K562 (cell line): ENCODE measurements at regions of chr18 and their contacts with region 1.

Region 1: DNA sequence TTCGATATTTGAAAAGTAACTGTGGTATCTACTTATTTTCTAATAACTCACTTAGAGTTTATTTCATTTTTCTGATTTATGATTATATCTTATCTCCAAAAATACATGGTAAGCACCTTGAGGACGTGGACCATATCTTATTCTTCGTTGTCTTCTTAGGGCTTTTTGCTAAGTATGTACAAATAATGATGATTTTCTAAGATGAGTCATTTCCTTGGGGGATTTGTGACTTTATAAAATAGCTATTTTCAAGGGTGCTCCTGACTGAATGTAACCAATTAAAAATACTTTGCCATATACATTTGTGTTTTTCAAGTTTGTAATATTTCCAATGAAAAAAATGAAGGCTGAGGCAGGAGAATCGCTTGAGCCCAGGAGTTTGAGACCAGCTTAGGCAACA is 56.3 kb downstream of the GREB1L start:
- DNase-seq: no peak
- ATAC-seq: no peak
- H3K4me3 ChIP-seq: no peak overlapping the region
- H3K27ac ChIP-seq: no peak overlapping the region
- H3K4me1 ChIP-seq: no peaks in the 10 kb centered on the region
- H3K27me3 ChIP-seq: no peaks in the 10 kb centered on the region
- CTCF ChIP-seq: no peak
- EP300 ChIP-seq: no peak
- POLR2A ChIP-seq: no peak
- RAD21 ChIP-seq: no peak

Region 2: DNA sequence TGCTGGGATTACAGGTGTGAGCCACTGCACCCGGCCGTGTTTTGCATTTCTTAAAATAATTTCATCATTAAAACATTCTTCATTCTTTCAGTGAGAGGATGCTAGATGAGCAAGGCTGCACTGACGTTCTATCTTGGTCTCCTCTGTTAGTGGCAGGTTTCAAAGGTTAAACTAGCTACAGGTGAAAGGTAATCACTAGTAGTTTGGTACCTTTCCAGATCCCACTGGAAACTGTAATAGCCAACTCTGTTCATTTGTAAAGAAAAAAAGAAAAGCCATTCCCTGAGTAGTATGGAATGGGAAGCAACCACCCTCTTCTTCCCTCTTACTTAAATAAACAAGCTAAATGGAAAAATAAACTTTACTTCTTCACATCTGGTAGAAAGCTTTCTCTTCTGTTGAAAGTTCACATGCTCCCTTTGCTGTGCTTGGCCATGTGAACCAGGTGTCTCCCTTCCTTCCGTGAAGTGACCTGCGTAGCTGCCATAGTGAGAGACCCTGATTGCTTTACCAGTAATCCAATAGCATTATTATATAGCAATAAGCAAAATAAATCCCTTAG is 37.7 kb after region 1 on chr18:
- CTCF ChIA-PET with region 1: no interaction called
- POLR2A ChIA-PET with region 1: no interaction called
- in situ Hi-C with region 1: loop called (anchors 5 kb)
- intact Hi-C with region 1: no loop called
- DNase-seq: no peak
- ATAC-seq: no peak
- H3K4me3 ChIP-seq: no peak overlapping the region
- H3K27ac ChIP-seq: no peak overlapping the region
- H3K4me1 ChIP-seq: no peaks in the 10 kb centered on the region
- H3K27me3 ChIP-seq: peaks cover 0 to 9% of the 10 kb centered on the region in 2 experiments; a peak in 3 of 5 replicates
- CTCF ChIP-seq: no peak
- EP300 ChIP-seq: no peak
- POLR2A ChIP-seq: no peak
- RAD21 ChIP-seq: no peak